Mammary epithelial cell (primary cell): ENCODE measurements at regions of chr13 and their contacts with region 1.

Region 1: GRCh38 chr13:28128030-28128429 is 10.3 kb upstream of the PAN3 start:
- DNase-seq: no peak
- H3K4me3 ChIP-seq: no peak overlapping the region
- H3K27ac ChIP-seq: no peak overlapping the region
- H3K4me1 ChIP-seq: no peaks in the 10 kb centered on the region
- H3K27me3 ChIP-seq: no peaks in the 10 kb centered on the region
- CTCF ChIP-seq: no peak

Region 2: GRCh38 chr13:27572234-27572901 is 555.7 kb before region 1 on chr13:
- CTCF ChIA-PET with region 1: interaction called, 12 read pairs
- dilution Hi-C with region 1: no loop called
- in situ Hi-C with region 1: no loop called
- intact Hi-C with region 1: no loop called
- DNase-seq: no peak
- H3K4me3 ChIP-seq: no peak overlapping the region
- H3K27ac ChIP-seq: peak overlapping the region; percentile 67
- H3K4me1 ChIP-seq: peaks cover 22% of the 10 kb centered on the region
- H3K27me3 ChIP-seq: no peaks in the 10 kb centered on the region
- CTCF ChIP-seq: no peak

Region 3: GRCh38 chr13:28324181-28324789 is 196.3 kb after region 1 on chr13:
- CTCF ChIA-PET with region 1: no interaction called
- dilution Hi-C with region 1: no loop called
- in situ Hi-C with region 1: no loop called
- intact Hi-C with region 1: no loop called
- DNase-seq: peak; percentile 46
- H3K4me3 ChIP-seq: no peak overlapping the region
- H3K27ac ChIP-seq: no peak overlapping the region
- H3K4me1 ChIP-seq: no peaks in the 10 kb centered on the region
- H3K27me3 ChIP-seq: no peaks in the 10 kb centered on the region
- CTCF ChIP-seq: peak; percentile 68 to 82